ENCODE measurements at regions of chr18 and their contacts with region 1.

Region 1: GRCh38 chr18:34867520-34867919 is 157.4 kb downstream of the DTNA start:
- DNase-seq: no peak
- ATAC-seq: no peak
- H3K4me3 ChIP-seq: no peak overlapping the region
- H3K27ac ChIP-seq: no peak overlapping the region
- H3K4me1 ChIP-seq: no peaks in the 10 kb centered on the region
- H3K27me3 ChIP-seq: no peaks in the 10 kb centered on the region
- CTCF ChIP-seq: no peak; the same call in 1 of the 2 replicates

Region 2: DNA sequence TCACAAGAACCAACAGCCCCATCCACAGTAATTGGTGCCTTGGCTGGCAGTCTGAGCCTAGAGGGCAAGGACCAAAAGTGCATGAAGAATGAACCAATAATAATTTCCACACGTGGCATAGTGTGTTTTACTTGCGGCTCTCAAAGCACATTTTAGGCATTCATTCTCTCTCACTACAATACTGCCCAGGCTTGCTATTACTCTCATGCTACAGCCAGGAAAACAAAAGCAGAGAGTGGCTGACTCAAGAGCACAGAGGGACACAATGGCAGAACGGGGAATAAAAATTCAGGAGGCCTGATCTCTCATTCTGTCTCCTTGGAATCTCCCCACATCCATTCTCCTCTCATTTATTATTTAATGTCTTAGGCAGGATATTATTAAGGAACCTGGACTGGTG is 585.8 kb before region 1 on chr18:
- CTCF ChIA-PET with region 1: no interaction called
- POLR2A ChIA-PET with region 1: no interaction called
- intact Hi-C with region 1: no loop called
- DNase-seq: no peak
- ATAC-seq: no peak
- H3K4me3 ChIP-seq: no peak overlapping the region
- H3K27ac ChIP-seq: no peak overlapping the region
- H3K4me1 ChIP-seq: no peaks in the 10 kb centered on the region
- H3K27me3 ChIP-seq: no peaks in the 10 kb centered on the region
- CTCF ChIP-seq: no peak

Region 3: GRCh38 chr18:34592961-34593382 is 274.5 kb before region 1 on chr18:
- CTCF ChIA-PET with region 1: no interaction called
- POLR2A ChIA-PET with region 1: no interaction called
- intact Hi-C with region 1: no loop called
- DNase-seq: no peak
- ATAC-seq: no peak
- H3K4me3 ChIP-seq: no peak overlapping the region
- H3K27ac ChIP-seq: no peak overlapping the region
- H3K4me1 ChIP-seq: no peaks in the 10 kb centered on the region; the same call in 1 of the 2 replicates
- H3K27me3 ChIP-seq: no peaks in the 10 kb centered on the region
- CTCF ChIP-seq: no peak

Region 4: DNA sequence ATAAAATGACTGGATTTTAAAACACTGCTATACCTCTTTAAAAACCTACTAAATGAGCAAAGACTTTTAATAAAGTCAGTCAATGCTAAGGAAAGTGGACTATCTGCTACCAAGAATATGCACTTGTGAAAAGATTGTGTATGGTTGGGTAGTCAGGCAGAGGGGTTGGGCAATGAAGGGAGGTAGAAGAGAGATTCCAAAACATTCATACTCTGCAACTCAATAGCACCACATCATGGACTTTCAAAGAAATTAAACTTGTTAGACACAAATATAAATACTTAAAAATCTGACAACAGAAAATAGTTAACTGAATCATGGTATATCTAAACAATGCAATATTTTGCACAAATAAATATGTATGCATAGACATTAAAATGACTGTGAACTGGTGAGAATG is 33.8 kb after region 1 on chr18:
- CTCF ChIA-PET with region 1: no interaction called
- POLR2A ChIA-PET with region 1: no interaction called
- intact Hi-C with region 1: loop called (anchors 5 kb)
- DNase-seq: peak; percentile 13
- ATAC-seq: peak; percentile 50
- H3K4me3 ChIP-seq: no peak overlapping the region
- H3K27ac ChIP-seq: no peak overlapping the region
- H3K4me1 ChIP-seq: no peaks in the 10 kb centered on the region
- H3K27me3 ChIP-seq: no peaks in the 10 kb centered on the region
- CTCF ChIP-seq: peak; percentile 25; the same call in 1 of the 2 replicates

Region 5: DNA sequence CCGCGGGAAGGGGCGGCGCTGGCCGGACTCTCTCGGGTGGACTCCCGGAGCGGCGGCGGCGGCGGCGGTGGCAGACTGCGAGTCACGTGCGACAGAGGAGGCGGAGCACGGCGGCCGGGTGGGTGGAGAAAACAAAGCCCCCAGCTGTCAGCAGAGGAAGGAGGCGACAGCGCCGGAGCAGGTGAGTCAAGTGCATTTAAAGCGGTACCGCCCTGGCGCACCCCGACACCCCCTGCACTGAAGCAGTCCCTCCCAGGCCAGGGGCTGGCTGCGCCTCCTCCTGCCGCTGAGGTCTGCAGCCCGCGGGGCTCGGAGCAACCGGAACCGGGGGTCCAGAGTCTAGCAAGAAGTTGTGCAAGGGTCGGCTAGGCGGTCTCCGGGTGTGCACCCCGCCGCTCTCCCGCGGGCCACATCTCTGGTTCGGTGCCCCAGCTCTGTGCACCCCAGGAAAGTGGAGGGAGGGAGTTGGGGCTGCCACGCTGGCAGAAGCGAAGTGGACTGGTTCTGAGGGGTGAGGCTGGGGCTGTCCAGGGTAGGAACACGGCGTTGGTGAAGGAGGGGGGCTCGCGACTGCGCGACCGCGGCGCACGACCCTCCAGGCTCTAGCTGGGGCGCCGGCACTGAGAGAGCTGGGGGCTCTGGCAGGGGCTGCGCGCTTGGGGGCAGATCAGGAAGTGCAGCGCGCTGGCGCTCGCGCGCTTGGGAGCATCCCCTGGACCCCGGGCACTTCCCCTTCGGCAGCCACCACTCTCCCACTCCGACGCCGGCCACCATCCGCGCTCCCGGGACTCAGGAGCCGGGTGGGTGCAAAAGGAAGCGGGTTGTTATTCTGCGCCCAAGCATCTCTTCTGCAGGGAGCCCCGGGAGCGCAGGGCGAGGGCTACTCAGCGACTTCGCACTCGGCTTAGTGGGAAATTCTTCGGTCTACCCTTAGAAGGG is 109.6 kb after region 1 on chr18:
- CTCF ChIA-PET with region 1: no interaction called
- POLR2A ChIA-PET with region 1: no interaction called
- intact Hi-C with region 1: loop called (anchors 10 kb)
- DNase-seq: no peak
- ATAC-seq: peak; percentile 21
- H3K4me3 ChIP-seq: peak overlapping the region; percentile 70
- H3K27ac ChIP-seq: no peak overlapping the region
- H3K4me1 ChIP-seq: 0 out of 2 replicates have a peak, but pooled peaks cover 9% of the 10 kb centered on the region
- H3K27me3 ChIP-seq: no peaks in the 10 kb centered on the region
- CTCF ChIP-seq: no peak

Region 6: DNA sequence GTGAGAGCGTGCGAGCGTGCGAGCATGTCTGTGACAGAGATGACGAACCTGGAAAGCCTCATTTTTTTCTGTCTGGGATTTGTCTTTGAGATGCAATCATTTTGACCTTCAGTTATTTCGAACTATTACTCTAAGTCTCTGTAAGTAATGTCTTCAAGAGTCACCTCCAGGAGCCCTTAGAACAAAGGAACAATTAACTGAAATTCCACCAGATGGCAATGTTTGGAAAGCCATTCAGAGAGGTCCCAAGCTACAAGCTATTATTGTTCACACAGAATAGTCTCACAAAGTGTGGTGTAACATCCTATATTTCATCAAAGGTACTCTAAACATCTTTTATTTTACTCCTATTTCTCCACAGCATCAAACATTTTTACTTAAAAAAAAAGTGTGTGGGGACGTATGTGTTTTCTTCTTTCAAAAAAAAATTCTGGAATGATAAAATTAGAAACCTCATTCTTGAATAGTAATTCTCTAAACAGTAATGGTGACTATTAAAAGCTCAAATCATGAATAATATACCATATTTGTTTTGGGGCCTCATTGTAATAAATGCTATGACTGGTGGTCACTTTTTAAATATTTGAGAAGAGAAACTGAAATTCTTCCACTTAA is 138.6 kb after region 1 on chr18:
- CTCF ChIA-PET with region 1: no interaction called
- POLR2A ChIA-PET with region 1: no interaction called
- intact Hi-C with region 1: loop called (anchors 10 kb)
- DNase-seq: peak; percentile 65
- ATAC-seq: peak; percentile 82
- H3K4me3 ChIP-seq: no peak overlapping the region
- H3K27ac ChIP-seq: no peak overlapping the region
- H3K4me1 ChIP-seq: no peaks in the 10 kb centered on the region
- H3K27me3 ChIP-seq: no peaks in the 10 kb centered on the region
- CTCF ChIP-seq: peak; percentile 53

Measured in PC-3 (cell line).